Esophagus muscularis mucosa (tissue), 4 donors: ENCODE measurements at regions of chr12 and their contacts with region 1.

Region 1: GRCh38 chr12:130747867-130748740 is 32.0 kb upstream of the RIMBP2 start:
- DNase-seq: no peak
- H3K4me3 ChIP-seq: peak overlapping the region in 1 of 4 donors; percentile 9
- H3K27ac ChIP-seq: no peak overlapping the region
- H3K4me1 ChIP-seq: peaks cover 0 to 8% (median 7%) of the 10 kb centered on the region in 4 donors
- H3K27me3 ChIP-seq: peaks cover 0 to 36% (median 0%) of the 10 kb centered on the region in 4 donors
- CTCF ChIP-seq: peak; percentile 65 to 79 (median 67)
- EP300 ChIP-seq: no peak
- POLR2A ChIP-seq: no peak

Region 2: GRCh38 chr12:130281153-130281799 is 466.8 kb before region 1 on chr12:
- intact Hi-C with region 1: loop called (anchors 10 kb)
- DNase-seq: no peak
- H3K4me3 ChIP-seq: peak overlapping the region in 2 of 4 donors; percentile 26 to 30
- H3K27ac ChIP-seq: no peak overlapping the region
- H3K4me1 ChIP-seq: no peaks in the 10 kb centered on the region
- H3K27me3 ChIP-seq: peaks cover 0 to 47% (median 0%) of the 10 kb centered on the region in 4 donors
- CTCF ChIP-seq: peak; percentile 18 to 91 (median 41)
- EP300 ChIP-seq: no peak
- POLR2A ChIP-seq: no peak